ENCODE measurements at regions of chr4 and their contacts with region 1.

Region 1: GRCh38 chr4:13548984-13549546 is 4.8 kb upstream of the NKX3-2 start:
- DNase-seq: peak; percentile 79 to 86 (median 80)
- ATAC-seq: peak; percentile 81 to 86 (median 84)
- H3K4me3 ChIP-seq: peak overlapping the region; percentile 20 to 34 (median 33)
- H3K27ac ChIP-seq: no peak overlapping the region
- H3K4me1 ChIP-seq: peaks cover 0 to 12% (median 5%) of the 10 kb centered on the region in 4 donors
- H3K27me3 ChIP-seq: peaks cover 18 to 39% of the 10 kb centered on the region in 2 donors
- CTCF ChIP-seq: peak; percentile 78 to 93 (median 93)
- POLR2A ChIP-seq: no peak

Region 2: GRCh38 chr4:12846368-12846767 is 702.7 kb before region 1 on chr4:
- intact Hi-C with region 1: loop called (anchors 5 to 10 kb)
- DNase-seq: no peak
- ATAC-seq: peak in 1 of 4 donors; percentile 26
- H3K4me3 ChIP-seq: no peak overlapping the region
- H3K27ac ChIP-seq: no peak overlapping the region
- H3K4me1 ChIP-seq: no peaks in the 10 kb centered on the region
- H3K27me3 ChIP-seq: no peaks in the 10 kb centered on the region
- CTCF ChIP-seq: no peak
- POLR2A ChIP-seq: no peak

Region 3: GRCh38 chr4:12852338-12853307 is 696.4 kb before region 1 on chr4:
- intact Hi-C with region 1: loop called (anchors 5 to 10 kb)
- DNase-seq: no peak
- ATAC-seq: peak; percentile 94 to 98 (median 97)
- H3K4me3 ChIP-seq: no peak overlapping the region
- H3K27ac ChIP-seq: no peak overlapping the region
- H3K4me1 ChIP-seq: peaks cover 0 to 3% (median 0%) of the 10 kb centered on the region in 4 donors
- H3K27me3 ChIP-seq: no peaks in the 10 kb centered on the region
- CTCF ChIP-seq: peak; percentile 68 to 81 (median 72)
- POLR2A ChIP-seq: no peak

Region 4: DNA sequence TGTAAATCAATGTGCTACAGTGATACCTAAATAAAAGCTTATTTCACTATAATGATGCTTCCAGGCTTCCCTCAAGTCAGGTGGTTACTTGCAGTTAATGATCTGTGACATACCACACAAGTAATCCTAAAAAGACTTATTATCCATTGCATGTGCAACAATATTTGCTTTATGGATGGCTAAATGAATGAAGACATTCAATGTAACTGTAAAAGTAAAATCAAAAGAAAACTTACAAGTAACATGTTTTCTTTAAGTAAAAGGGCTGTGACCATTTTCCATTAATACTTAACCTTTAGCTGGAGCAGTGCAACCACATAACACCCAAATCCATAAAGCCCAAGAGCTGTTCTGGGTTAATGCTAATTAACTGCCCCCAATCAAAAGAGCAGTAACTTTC is 107.6 kb before region 1 on chr4:
- intact Hi-C with region 1: no loop called
- DNase-seq: no peak
- ATAC-seq: no peak
- H3K4me3 ChIP-seq: no peak overlapping the region
- H3K27ac ChIP-seq: no peak overlapping the region
- H3K4me1 ChIP-seq: no peaks in the 10 kb centered on the region
- H3K27me3 ChIP-seq: no peaks in the 10 kb centered on the region
- CTCF ChIP-seq: no peak
- POLR2A ChIP-seq: no peak